OCI-LY7 (cell line): ENCODE measurements at regions of chr11 and their contacts with region 1.

Region 1: GRCh38 chr11:122697636-122698167 is 42.2 kb downstream of the UBASH3B start:
- DNase-seq: peak; percentile 98
- H3K4me3 ChIP-seq: peak overlapping the region; percentile 64
- H3K27ac ChIP-seq: peak overlapping the region; percentile 99
- H3K4me1 ChIP-seq: peaks cover 96% of the 10 kb centered on the region
- CTCF ChIP-seq: no peak

Region 2: GRCh38 chr11:122317305-122317704 is 380.4 kb before region 1 on chr11:
- CTCF ChIA-PET with region 1: no interaction called
- POLR2A ChIA-PET with region 1: no interaction called
- intact Hi-C with region 1: no loop called
- DNase-seq: no peak
- H3K4me3 ChIP-seq: no peak overlapping the region
- H3K27ac ChIP-seq: no peak overlapping the region
- H3K4me1 ChIP-seq: no peaks in the 10 kb centered on the region
- CTCF ChIP-seq: no peak

Region 3: DNA sequence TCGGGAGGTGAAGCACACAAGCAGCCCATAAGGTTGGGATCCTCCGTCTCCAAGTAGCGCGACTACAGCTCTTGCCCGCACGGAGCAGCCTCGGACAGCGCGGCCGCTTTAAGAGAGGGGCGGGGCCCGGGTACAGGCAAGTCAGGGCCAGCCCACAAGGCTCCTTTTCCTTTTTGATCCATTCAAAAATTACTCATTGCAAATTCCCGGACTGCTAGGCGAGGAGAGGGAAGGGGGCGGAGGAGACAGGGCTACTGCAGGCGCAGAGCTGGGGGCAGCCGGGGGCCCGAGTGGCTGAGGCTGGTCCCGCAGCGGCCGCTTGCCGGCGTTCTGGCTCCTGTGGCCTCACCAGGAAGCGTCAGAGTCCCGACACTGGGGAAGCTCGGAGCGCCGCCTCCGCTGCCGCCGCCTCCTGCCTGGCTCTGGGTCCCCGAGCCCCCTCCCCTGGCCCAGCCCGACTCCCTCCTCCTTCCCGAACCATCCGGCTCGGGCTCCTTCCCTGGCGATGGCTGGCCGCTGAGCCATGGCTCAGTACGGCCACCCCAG is 42.1 kb before region 1 on chr11 and contains the start of gene UBASH3B:
- CTCF ChIA-PET with region 1: interaction called, 5 read pairs
- POLR2A ChIA-PET with region 1: interaction called, 175 read pairs
- intact Hi-C with region 1: loop called (anchors 1 kb)
- DNase-seq: peak; percentile 80
- H3K4me3 ChIP-seq: peak within 1 kb of the TSS; percentile 77
- H3K27ac ChIP-seq: peak within 1 kb of the TSS; percentile 43
- H3K4me1 ChIP-seq: peaks cover 46% of the 10 kb centered on the region
- CTCF ChIP-seq: no peak; the same call in 1 of the 2 replicates
- total RNA-seq, gene UBASH3B: 36.3 and 54.7 TPM in 2 replicates

Region 4: GRCh38 chr11:122673701-122674100 is 24.0 kb before region 1 on chr11:
- CTCF ChIA-PET with region 1: interaction called, 6 read pairs
- POLR2A ChIA-PET with region 1: interaction called, 175 read pairs
- intact Hi-C with region 1: loop called (anchors 1 kb)
- DNase-seq: no peak
- H3K4me3 ChIP-seq: no peak overlapping the region
- H3K27ac ChIP-seq: peak overlapping the region; percentile 26
- H3K4me1 ChIP-seq: peaks cover 76% of the 10 kb centered on the region
- CTCF ChIP-seq: no peak

Region 5: DNA sequence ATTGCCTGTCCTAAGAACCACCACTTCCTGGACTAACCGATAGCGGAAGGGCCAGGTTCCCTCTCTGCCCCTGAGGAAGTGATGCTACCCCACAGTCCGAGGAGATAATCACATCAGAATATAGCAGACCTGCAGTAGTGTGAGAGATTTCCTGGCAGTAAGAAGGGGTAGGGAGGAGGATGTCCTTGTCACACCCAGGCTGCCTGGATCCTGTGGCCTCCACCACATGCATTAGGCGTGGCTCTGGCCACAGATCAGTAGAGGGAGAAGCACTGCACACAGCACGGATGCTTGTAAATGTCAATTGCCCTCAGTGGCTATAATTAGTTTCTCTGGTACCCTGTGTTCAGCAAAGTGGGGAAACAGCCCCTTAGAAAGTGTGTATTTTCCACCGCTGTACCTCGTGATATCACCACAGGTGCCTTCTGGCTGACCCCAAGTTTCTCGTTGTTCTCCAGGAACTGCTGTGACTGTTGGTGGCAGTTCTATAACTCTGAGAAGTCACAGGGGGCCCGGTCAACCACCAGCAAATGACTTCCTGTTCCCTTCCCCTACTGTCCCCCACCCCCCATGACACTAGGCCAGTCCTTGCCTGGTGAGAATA is 19.7 kb after region 1 on chr11:
- CTCF ChIA-PET with region 1: interaction called, 7 read pairs
- POLR2A ChIA-PET with region 1: interaction called, 77 read pairs
- intact Hi-C with region 1: loop called (anchors 1 kb)
- DNase-seq: peak; percentile 90
- H3K4me3 ChIP-seq: peak overlapping the region; percentile 47
- H3K27ac ChIP-seq: peak overlapping the region; percentile 92
- H3K4me1 ChIP-seq: peaks cover 95% of the 10 kb centered on the region
- CTCF ChIP-seq: no peak

Region 6: GRCh38 chr11:122749005-122749687 is 51.4 kb after region 1 on chr11:
- CTCF ChIA-PET with region 1: interaction called, 32 read pairs
- POLR2A ChIA-PET with region 1: interaction called, 88 read pairs
- intact Hi-C with region 1: loop called (anchors 1 kb)
- DNase-seq: peak; percentile 70
- H3K4me3 ChIP-seq: peak overlapping the region; percentile 4
- H3K27ac ChIP-seq: no peak overlapping the region
- H3K4me1 ChIP-seq: peaks cover 95% of the 10 kb centered on the region
- CTCF ChIP-seq: no peak